GM12878 (cell line): ENCODE measurements at regions of chr15 and their contacts with region 1.

Region 1: DNA sequence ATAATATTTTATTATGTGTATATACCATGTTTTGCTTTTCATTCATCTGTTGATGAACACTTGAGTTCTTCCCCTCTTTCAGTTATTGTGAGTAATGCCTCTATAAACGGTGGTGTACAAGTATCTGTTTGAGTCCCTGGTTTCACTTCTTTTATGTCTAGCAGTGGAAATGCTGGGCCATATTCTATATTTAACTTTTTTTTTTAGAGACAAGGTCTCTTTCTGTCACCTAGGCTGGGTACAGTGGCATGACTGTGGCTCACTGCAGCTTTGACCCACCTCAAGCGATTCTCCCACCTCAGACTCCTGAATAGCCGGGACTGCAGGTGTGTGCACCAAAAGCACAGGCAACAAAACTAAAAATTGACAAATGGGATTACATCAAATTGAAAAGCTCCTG is 19.9 kb downstream of the GOLM2 start:
- DNase-seq: peak; percentile 73
- ATAC-seq: peak; percentile 93
- H3K4me3 ChIP-seq: peak overlapping the region; percentile 47
- H3K27ac ChIP-seq: peak overlapping the region; percentile 83
- H3K4me1 ChIP-seq: peaks cover 42% of the 10 kb centered on the region
- H3K27me3 ChIP-seq: no peaks in the 10 kb centered on the region
- CTCF ChIP-seq: no peak
- EP300 ChIP-seq: peak; percentile 76 to 94; a peak in 3 of 4 replicates
- POLR2A ChIP-seq: no peak
- RAD21 ChIP-seq: no peak

Region 2: DNA sequence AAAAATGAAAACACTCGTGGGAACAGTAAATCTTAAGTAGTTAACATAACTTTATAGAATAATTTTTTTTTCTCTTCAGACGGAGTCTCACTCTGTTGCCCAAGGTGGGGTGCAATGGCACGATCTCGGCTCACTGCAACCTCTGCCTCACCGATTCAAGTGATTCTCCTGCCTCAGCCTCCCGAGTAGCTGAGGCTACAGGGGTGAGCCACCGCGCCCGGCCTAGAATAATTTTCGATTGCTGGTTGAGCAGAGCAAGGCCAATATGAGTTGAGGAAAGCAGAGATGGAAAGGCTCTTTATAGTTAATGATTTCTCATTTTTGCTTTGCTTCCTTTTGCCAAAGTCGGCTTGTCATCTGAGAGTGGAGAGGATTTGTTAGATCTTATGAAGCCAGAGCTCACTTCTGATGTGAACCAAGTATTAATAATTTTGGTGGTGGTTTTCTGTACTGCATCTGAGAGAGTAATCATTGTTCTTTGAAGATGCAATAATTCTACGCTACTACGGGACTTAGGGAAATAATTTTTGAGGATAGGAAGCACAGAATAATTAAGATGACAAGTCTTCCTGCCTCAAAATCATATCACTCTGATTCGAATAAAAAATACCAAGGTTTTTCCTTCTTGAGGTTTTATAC is 21.5 kb before region 1 on chr15:
- CTCF ChIA-PET with region 1: interaction called, 8 read pairs
- POLR2A ChIA-PET with region 1: interaction called, 9 read pairs
- RAD21 ChIA-PET with region 1: interaction called, 19 read pairs
- SMC1A ChIA-PET with region 1: interaction called, 69 read pairs
- in situ Hi-C with region 1: no loop called
- intact Hi-C with region 1: loop called (anchors 2 kb)
- DNase-seq: no peak
- ATAC-seq: no peak
- H3K4me3 ChIP-seq: peak overlapping the region; percentile 96
- H3K27ac ChIP-seq: peak overlapping the region; percentile 97; the same call in 1 of the 2 replicates
- H3K4me1 ChIP-seq: peaks cover 3% of the 10 kb centered on the region; the same call in 1 of the 2 replicates
- H3K27me3 ChIP-seq: no peaks in the 10 kb centered on the region
- CTCF ChIP-seq: no peak
- EP300 ChIP-seq: no peak
- POLR2A ChIP-seq: no peak
- RAD21 ChIP-seq: no peak

Region 3: GRCh38 chr15:44296625-44297524 is 11.5 kb before region 1 on chr15:
- CTCF ChIA-PET with region 1: interaction called, 10 read pairs
- POLR2A ChIA-PET with region 1: interaction called, 25 read pairs
- RAD21 ChIA-PET with region 1: interaction called, 13 read pairs
- SMC1A ChIA-PET with region 1: interaction called, 69 read pairs
- in situ Hi-C with region 1: no loop called
- intact Hi-C with region 1: no loop called
- DNase-seq: no peak
- ATAC-seq: peak; percentile 64
- H3K4me3 ChIP-seq: no peak overlapping the region
- H3K27ac ChIP-seq: peak overlapping the region; percentile 43
- H3K4me1 ChIP-seq: peaks cover 19% of the 10 kb centered on the region
- H3K27me3 ChIP-seq: no peaks in the 10 kb centered on the region
- CTCF ChIP-seq: no peak
- EP300 ChIP-seq: no peak
- POLR2A ChIP-seq: no peak
- RAD21 ChIP-seq: no peak

Region 4: DNA sequence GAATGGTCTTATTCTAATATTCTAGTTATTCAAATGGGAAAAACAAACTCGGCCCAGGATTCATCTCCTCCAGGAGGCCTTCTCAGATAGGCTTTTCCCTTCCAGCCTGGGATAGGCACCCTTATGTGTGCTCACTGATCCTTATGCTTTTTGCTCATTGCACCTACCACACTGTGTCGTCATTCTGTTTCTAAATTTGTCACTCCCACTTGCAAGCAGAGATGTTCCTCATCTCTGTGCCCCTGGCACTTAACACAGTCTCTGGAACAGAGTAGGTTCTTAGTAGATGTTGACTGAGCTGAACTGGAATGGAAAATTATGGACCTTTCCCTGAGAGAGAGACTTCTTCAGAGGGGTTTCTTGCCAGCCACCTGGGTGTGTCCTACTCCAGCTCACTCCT is 373.8 kb after region 1 on chr15:
- CTCF ChIA-PET with region 1: no interaction called
- POLR2A ChIA-PET with region 1: no interaction called
- RAD21 ChIA-PET with region 1: no interaction called
- SMC1A ChIA-PET with region 1: no interaction called
- in situ Hi-C with region 1: no loop called
- intact Hi-C with region 1: no loop called
- DNase-seq: no peak
- ATAC-seq: peak; percentile 71
- H3K4me3 ChIP-seq: no peak overlapping the region
- H3K27ac ChIP-seq: no peak overlapping the region
- H3K4me1 ChIP-seq: peaks cover 28% of the 10 kb centered on the region
- H3K27me3 ChIP-seq: no peaks in the 10 kb centered on the region
- CTCF ChIP-seq: no peak
- EP300 ChIP-seq: no peak
- POLR2A ChIP-seq: no peak
- RAD21 ChIP-seq: no peak